ENCODE measurements at regions of chr11 and their contacts with region 1.

Region 1: DNA sequence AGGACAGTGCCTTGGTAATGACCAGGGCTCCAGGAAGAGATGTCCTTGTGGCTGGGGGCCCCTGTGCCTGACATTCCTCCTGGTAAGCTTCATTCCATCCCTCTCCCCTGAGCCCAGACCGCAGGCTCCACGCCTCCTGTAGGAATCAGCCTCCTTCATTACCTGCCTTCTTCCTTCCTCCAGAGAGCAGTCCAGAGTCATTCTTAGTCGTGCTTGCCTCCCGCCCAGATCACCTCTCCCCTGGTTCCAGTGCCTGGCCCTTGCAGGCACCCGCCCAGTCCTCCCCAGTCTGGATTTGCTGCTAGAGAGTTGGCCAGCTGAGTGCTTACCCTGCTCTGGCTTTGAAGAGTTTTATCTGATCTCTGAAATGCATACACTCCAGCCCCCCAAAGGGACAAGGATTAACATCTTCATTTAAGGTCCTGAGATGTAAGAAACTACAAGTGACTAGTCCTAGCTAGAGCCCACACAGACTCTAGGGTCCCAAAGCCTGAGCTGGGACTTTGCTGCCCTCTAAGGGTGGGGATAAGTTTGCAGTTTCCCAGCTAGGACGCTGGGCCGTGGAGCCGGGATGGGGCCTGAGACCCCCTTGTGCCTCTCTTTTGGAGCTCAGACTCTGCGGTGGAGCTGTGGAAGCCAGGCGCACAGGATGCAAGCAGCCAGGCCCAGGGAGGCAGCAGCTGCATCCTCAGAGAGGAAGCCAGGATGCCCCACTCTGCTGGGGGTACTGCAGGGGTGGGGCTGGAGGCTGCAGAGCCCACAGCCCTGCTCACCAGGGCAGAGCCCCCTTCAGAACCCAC is 1.6 kb downstream of the NR1H3 start:
- DNase-seq: peak; percentile 64 to 94 (median 91)
- H3K4me3 ChIP-seq: peak overlapping the region in 5 of 7 experiments; percentile 16 to 77 (median 56)
- H3K27ac ChIP-seq: peak overlapping the region in 1 of 2 experiments; percentile 75
- H3K4me1 ChIP-seq: peaks cover 14 to 69% (median 57%) of the 10 kb centered on the region in 4 experiments
- H3K27me3 ChIP-seq: no peaks in the 10 kb centered on the region

Region 2: DNA sequence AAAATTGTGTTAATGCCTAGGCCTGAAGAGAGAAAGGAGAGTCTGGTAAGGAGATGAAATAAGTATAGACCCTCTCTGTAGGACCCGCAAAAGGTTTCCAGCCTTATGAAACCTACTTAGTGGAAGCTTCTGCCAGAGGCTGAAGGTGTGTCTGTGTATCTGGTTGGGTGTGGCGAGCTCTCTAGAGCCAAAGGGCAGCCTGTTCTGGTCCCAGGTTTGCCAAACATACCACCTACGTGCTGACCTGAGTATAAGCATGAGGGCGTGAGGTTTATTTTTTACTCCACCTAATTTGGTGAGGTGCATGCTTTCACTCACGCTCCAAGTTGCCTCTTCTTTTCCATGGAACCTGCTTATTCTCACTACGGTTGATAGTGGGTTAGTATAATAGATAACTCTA is 317.2 kb before region 1 on chr11:
- CTCF ChIA-PET with region 1: no interaction called
- POLR2A ChIA-PET with region 1: no interaction called
- DNase-seq: no peak
- H3K4me3 ChIP-seq: no peak overlapping the region
- H3K27ac ChIP-seq: no peak overlapping the region
- H3K4me1 ChIP-seq: peaks cover 0 to 3% (median 2%) of the 10 kb centered on the region in 4 experiments
- H3K27me3 ChIP-seq: no peaks in the 10 kb centered on the region

Region 3: DNA sequence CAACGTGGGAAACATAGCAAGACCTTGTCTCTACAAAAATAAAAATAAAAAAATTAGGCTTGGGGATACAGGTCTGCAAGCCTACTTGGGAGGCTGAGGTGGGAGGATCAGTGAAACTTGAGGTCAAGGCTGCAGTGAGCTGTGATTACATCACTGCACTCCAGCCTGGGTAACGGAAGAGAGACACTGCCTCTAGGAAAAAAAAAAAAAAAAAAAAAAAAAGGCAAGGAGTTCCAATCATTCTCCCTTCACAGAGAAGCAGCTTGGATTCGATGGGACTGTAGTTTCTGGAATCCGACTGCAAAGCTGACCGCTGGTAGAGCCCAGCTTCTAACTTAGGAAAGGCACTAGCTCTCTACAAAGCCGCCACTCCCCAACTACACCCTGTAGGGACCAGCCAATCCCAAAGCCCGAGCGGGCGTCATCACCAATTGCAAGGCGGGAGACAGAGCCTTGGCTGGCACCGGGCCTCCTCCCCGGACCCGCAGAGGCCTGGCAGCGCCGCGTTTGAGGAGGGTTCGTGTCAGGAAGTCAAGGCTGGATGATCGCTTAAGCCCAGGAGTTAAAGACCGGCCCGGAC is 45.3 kb before region 1 on chr11:
- CTCF ChIA-PET with region 1: interaction called, 33 read pairs
- POLR2A ChIA-PET with region 1: no interaction called
- DNase-seq: peak; percentile 90 to 93 (median 91)
- H3K4me3 ChIP-seq: peak overlapping the region; percentile 70 to 95 (median 81)
- H3K27ac ChIP-seq: peak overlapping the region; percentile 79 to 87
- H3K4me1 ChIP-seq: peaks cover 10 to 27% (median 23%) of the 10 kb centered on the region in 4 experiments
- H3K27me3 ChIP-seq: no peaks in the 10 kb centered on the region

Region 4: DNA sequence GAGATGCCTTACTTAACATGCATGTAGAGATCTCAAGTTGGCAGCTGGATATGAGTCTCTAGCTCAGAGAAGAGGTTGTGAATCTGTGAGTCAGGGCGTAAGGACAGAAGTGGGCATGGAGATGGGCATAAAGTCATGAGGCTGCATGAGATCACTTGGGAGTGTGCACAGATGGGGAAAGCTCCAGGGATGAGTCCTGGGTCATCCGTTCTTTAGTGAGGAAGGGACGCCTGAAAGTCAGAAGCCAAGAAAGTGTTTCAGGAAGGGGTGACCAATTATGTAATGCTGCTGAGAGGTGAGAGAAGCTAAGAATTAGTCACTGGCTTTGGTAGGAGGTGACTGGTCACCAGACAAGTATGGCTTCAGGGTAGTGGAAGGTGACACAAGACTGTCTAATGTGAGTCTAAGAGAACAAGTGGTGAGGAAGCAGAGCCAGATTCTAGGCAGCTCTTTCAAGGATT is 17.5 kb before region 1 on chr11:
- CTCF ChIA-PET with region 1: interaction called, 145 read pairs
- POLR2A ChIA-PET with region 1: interaction called, 4 read pairs
- DNase-seq: no peak
- H3K4me3 ChIP-seq: no peak overlapping the region
- H3K27ac ChIP-seq: no peak overlapping the region
- H3K4me1 ChIP-seq: no peaks in the 10 kb centered on the region
- H3K27me3 ChIP-seq: no peaks in the 10 kb centered on the region

Region 5: GRCh38 chr11:47328404-47329390 is 69.3 kb after region 1 on chr11:
- CTCF ChIA-PET with region 1: no interaction called
- POLR2A ChIA-PET with region 1: no interaction called
- DNase-seq: peak in 2 of 3 donors; percentile 6 to 8
- H3K4me3 ChIP-seq: no peak overlapping the region
- H3K27ac ChIP-seq: no peak overlapping the region
- H3K4me1 ChIP-seq: peaks cover 0 to 13% (median 6%) of the 10 kb centered on the region in 4 experiments
- H3K27me3 ChIP-seq: no peaks in the 10 kb centered on the region